ENCODE measurements at regions of chr16 and their contacts with region 1.

Region 1: GRCh38 chr16:17459530-17460521 is 10.9 kb downstream of the XYLT1 start:
- DNase-seq: peak in 1 of 2 donors; percentile 29
- H3K4me3 ChIP-seq: no peak overlapping the region
- H3K27ac ChIP-seq: no peak overlapping the region
- H3K4me1 ChIP-seq: peaks cover 0 to 17% (median 0%) of the 10 kb centered on the region in 4 donors
- H3K27me3 ChIP-seq: no peaks in the 10 kb centered on the region
- CTCF ChIP-seq: no peak

Region 2: DNA sequence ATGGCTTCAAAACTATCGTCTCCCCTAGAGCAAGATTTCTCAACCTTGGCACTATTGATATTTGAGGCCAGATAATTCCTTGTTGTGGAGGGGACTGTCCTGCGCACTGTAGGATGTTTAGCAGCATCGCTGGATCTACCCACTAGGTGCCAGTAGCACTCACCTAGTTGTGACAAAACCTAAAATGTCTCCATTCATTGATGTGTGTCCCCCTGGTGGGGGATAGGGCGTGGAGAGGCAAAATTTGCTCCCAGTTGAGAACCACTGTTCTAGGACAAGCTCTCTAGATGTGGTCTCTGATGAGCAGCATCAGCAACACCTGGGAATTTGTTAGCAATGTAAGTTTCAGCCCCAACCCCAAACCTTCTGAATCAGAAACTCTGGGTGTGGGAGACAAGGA is 248.0 kb before region 1 on chr16:
- intact Hi-C with region 1: loop called (anchors 10 kb)
- DNase-seq: no peak
- H3K4me3 ChIP-seq: no peak overlapping the region
- H3K27ac ChIP-seq: no peak overlapping the region
- H3K4me1 ChIP-seq: no peaks in the 10 kb centered on the region
- H3K27me3 ChIP-seq: no peaks in the 10 kb centered on the region
- CTCF ChIP-seq: peak in 1 of 2 experiments; percentile 13

Region 3: DNA sequence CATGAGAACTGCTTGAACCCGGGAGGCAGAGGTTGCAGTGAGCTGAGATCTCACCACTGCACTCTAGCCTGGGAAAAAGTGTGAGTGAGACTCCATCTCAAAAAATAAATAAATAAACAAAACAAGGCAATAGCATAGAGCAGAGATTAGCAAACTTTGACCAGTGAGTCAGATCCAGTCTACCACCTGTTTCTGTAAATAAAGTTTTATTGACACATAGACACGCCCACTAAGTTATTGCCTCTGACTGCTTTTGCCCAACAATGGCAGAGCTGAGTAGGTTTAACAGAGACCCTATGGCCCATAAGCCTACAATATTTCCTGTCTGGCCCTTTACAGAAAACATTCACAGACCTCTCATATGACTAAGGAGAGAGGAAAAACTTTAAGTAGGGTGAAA is 33.4 kb before region 1 on chr16:
- intact Hi-C with region 1: loop called (anchors 5 kb)
- DNase-seq: no peak
- H3K4me3 ChIP-seq: no peak overlapping the region
- H3K27ac ChIP-seq: no peak overlapping the region
- H3K4me1 ChIP-seq: no peaks in the 10 kb centered on the region
- H3K27me3 ChIP-seq: no peaks in the 10 kb centered on the region
- CTCF ChIP-seq: no peak